ENCODE measurements at regions of chr1 and their contacts with region 1.

Region 1: GRCh38 chr1:41484372-41485241 is at the start of gene EDN2:
- DNase-seq: peak; percentile 76
- H3K4me3 ChIP-seq: no peak within 1 kb of the TSS
- H3K27ac ChIP-seq: peak within 1 kb of the TSS; percentile 70 to 87
- H3K4me1 ChIP-seq: peaks cover 60 to 63% of the 10 kb centered on the region in 2 experiments
- H3K27me3 ChIP-seq: no peaks in the 10 kb centered on the region
- CTCF ChIP-seq: peak; percentile 30
- EP300 ChIP-seq: no peak
- RAD21 ChIP-seq: peak; percentile 28
- polyA plus RNA-seq, gene EDN2: 0.97 and 1.7 TPM in 2 replicates

Region 2: DNA sequence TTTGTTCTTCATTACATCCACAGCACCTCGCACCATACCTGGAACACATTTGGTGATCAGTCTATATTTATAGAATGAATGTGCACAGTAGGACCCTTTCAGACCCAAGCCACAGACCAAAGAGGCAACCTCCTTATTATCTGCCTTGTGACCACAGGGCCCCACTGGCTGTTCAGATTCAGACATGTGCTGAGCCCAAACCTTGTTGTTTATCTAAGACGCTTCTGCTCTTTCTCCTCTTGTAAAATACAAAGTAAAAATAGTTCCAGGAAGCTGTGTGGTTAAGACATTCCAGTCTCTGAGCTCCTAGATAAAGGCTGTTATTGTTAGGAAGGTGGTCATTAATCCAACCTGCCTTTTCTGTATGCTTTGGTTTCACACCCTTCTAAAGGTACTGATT is 238.9 kb before region 1 on chr1:
- CTCF ChIA-PET with region 1: no interaction called
- POLR2A ChIA-PET with region 1: no interaction called
- DNase-seq: no peak
- H3K4me3 ChIP-seq: no peak overlapping the region
- H3K27ac ChIP-seq: no peak overlapping the region
- H3K4me1 ChIP-seq: peaks cover 15 to 17% of the 10 kb centered on the region in 2 experiments; a peak in 3 of 4 replicates
- H3K27me3 ChIP-seq: no peaks in the 10 kb centered on the region
- CTCF ChIP-seq: no peak
- EP300 ChIP-seq: no peak
- RAD21 ChIP-seq: no peak

Region 3: DNA sequence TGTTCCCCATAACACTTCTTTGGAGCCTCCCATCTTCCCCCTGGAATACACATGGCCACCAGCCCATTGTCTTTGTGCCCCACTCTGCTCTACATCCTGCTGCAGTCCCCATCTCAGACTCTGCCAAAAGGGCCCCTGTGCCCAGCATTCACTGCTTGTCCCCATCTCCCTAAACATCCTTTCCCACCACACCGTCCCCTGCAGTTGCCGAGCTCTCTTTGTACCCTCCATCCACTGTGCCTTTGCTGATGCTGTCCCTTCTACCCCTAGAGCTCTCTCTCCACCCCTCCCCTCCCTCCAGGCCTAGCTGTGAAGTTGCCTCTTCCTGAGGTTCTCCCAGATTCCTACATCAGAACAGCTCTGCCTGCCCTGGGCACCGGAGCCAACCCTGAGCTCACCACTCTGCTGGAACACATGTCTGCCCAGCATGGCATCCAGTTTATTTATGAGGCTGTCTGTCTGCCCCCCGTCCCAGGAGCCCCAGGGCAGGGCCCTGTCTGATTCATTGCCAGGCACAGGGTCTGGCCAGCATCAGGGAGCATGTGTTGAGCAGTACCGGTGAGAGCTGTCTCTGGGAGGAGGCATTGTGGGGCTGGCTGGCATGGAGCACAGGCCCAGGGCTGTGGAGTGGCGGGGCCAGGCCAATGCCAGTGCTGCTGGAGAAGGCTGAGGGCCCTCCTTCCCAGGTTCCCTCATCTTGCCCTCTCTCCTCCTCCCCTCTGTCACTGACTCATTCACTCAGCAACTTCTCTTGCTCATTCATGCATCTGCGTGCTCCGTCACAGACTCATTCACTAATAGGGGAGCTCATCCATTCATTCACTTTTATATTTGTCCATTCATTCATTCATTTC is 28.9 kb before region 1 on chr1:
- CTCF ChIA-PET with region 1: interaction called, 11 read pairs
- POLR2A ChIA-PET with region 1: interaction called, 3 read pairs
- DNase-seq: peak; percentile 92
- H3K4me3 ChIP-seq: no peak overlapping the region
- H3K27ac ChIP-seq: peak overlapping the region; percentile 76 to 91
- H3K4me1 ChIP-seq: peaks cover 24 to 64% of the 10 kb centered on the region in 2 experiments
- H3K27me3 ChIP-seq: no peaks in the 10 kb centered on the region
- CTCF ChIP-seq: no peak
- EP300 ChIP-seq: peak; percentile 91 to 97
- RAD21 ChIP-seq: no peak; the same call in 1 of the 2 replicates

Region 4: DNA sequence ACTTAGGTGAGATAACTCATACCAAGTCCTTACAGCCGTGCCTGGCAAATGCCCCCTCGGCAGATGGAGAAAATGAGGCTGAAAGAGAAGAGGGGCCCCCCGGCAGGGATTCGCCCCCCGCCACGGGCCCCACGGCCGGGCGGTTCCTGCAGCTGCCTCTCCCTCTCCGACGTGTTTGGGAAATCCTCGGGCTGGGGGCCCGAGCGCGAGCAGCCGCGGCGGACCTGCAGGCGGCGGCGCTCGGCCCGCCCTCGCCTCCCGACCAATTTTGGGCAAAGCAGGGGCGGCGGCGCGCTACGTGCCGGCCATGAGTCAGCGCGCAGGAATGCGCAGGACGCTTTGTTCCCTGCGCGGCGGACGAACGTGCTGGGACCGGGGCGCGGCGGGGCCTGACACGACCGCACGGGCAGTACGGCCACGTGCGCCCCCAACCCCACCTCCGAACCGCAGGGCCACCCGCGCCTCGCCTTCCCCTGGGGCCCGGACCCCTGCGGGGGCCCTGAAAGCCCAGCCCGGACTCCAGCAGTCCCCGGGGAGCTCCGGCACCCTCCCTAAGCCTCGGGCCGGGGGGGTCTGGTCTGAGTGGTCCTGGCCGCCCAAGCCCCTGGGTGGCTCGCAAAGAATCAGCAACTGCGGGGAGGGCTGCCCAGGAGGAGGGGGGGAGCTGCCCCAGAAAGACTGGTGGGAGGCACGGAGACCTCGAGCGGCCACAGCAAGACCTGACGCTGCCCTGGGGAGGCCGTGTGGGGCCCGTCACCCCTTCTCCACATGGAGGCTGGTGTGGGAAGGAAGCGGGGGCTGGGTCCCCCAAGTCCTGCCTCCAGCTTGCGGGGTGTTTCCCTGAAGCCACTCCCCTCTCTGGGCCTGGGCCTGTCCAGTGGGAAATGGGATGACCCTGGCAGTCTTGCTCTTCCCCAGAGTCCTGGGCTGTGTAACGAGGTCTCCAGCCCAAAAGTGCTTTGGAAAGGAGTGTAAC is 11.8 kb after region 1 on chr1:
- CTCF ChIA-PET with region 1: interaction called, 93 read pairs
- POLR2A ChIA-PET with region 1: no interaction called
- DNase-seq: no peak
- H3K4me3 ChIP-seq: no peak overlapping the region
- H3K27ac ChIP-seq: no peak overlapping the region
- H3K4me1 ChIP-seq: peaks cover 25 to 43% of the 10 kb centered on the region in 2 experiments; a peak in 3 of 4 replicates
- H3K27me3 ChIP-seq: no peaks in the 10 kb centered on the region
- CTCF ChIP-seq: no peak
- EP300 ChIP-seq: no peak
- RAD21 ChIP-seq: no peak

Region 5: GRCh38 chr1:41599912-41600311 is 115.3 kb after region 1 on chr1:
- CTCF ChIA-PET with region 1: no interaction called
- POLR2A ChIA-PET with region 1: no interaction called
- DNase-seq: no peak
- H3K4me3 ChIP-seq: no peak overlapping the region
- H3K27ac ChIP-seq: no peak overlapping the region
- H3K4me1 ChIP-seq: no peaks in the 10 kb centered on the region
- H3K27me3 ChIP-seq: no peaks in the 10 kb centered on the region
- CTCF ChIP-seq: peak; percentile 64
- EP300 ChIP-seq: no peak
- RAD21 ChIP-seq: peak; percentile 12; the same call in 1 of the 2 replicates

Region 6: GRCh38 chr1:41791667-41792484 is 307.3 kb after region 1 on chr1:
- CTCF ChIA-PET with region 1: no interaction called
- POLR2A ChIA-PET with region 1: no interaction called
- DNase-seq: no peak
- H3K4me3 ChIP-seq: no peak overlapping the region
- H3K27ac ChIP-seq: no peak overlapping the region
- H3K4me1 ChIP-seq: no peaks in the 10 kb centered on the region
- H3K27me3 ChIP-seq: no peaks in the 10 kb centered on the region
- CTCF ChIP-seq: no peak
- EP300 ChIP-seq: no peak
- RAD21 ChIP-seq: no peak

Measured in SK-N-SH (cell line).